GM10248 (cell line): ENCODE measurements at regions of chr11 and their contacts with region 1.

Region 1: DNA sequence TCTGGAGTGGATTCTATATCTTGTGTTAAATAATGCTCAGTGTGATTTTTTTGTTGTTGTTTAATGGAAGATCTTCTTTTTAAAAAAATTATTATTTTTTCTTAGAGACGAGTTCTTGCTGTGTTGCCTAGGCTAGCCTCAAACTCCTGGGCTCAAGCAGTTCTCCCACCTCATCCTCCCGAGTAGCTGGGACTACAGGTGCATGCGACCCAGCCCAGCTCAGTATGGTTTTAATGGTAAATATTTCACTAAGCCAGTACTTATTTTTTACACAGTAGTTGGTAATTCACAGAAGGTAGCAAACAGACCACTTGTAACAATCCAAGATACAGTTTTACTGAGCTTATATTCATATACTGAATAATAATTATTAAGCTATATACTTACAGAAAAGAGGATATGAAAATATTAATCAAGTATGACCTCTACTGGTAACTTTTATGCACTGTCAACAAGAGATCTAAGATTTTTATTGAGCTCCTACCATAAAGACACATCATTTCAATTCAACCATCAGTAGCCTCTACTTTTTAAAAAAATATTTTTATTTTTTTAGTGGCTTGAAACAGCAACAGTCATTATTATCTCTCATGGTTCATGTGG is 6.1 kb upstream of the CD59 start:
- DNase-seq: no peak
- CTCF ChIP-seq: peak; percentile 50

Region 2: GRCh38 chr11:33362051-33362910 is 380.1 kb before region 1 on chr11:
- CTCF ChIA-PET with region 1: interaction called, 16 read pairs
- POLR2A ChIA-PET with region 1: no interaction called
- DNase-seq: peak; percentile 45
- CTCF ChIP-seq: peak; percentile 45

Region 3: DNA sequence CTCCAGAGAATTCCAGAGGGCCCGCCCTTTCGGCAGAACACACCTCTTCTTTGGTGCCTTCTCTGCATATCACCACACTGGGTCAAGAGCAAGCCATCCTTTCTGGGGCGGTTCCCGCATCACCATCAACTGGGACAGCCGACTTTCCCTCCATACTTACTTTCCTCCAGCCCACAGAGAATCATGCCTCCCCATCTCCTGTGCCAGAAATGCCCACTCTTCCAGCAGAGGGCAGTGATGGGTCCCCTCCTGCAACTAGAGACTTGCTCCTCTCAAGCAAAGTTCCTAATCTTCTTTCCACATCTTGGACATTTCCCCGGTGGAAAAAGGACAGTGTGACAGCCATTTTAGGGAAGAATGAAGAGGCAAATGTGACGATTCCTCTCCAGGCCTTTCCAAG is 199.4 kb before region 1 on chr11:
- CTCF ChIA-PET with region 1: interaction called, 10 read pairs
- POLR2A ChIA-PET with region 1: no interaction called
- DNase-seq: peak; percentile 64
- CTCF ChIP-seq: peak; percentile 58

Region 4: GRCh38 chr11:33700425-33701271 is 41.7 kb before region 1 on chr11 and contains the start of gene C11orf91:
- CTCF ChIA-PET with region 1: interaction called, 17 read pairs
- POLR2A ChIA-PET with region 1: interaction called, 3 read pairs
- DNase-seq: peak; percentile 97
- CTCF ChIP-seq: no peak

Region 5: DNA sequence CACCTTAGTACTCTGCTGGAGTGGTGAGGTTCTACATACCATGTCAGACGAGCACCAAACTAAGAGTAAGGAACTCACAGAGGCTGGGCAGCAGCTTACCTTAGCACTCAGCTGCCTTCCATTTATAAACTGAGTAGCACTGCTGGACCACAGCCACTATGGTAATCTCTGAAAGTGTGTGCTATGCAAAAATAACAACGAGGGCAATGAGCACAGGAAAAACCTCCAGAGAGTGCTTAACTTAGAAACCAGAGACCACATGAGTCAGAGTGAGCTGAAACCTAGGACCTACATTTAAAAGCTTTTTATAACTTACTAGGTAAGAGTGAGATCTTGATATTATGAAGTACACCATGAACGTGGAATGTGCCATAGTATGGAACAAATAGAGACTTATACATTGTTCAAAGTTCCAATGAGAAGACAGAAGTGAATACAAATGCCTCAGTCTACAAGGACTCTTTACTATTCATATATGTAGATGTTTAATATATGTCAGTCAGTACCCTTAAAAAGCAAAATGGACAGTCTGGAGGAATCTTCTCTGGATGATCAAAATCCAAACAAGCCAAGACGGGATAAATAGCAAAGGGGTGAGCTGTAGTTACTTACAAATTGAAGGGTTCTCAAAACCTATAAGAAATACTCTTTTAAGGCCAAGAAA is 11.1 kb after region 1 on chr11:
- CTCF ChIA-PET with region 1: interaction called, 33 read pairs
- POLR2A ChIA-PET with region 1: no interaction called
- DNase-seq: peak; percentile 39
- CTCF ChIP-seq: no peak

Region 6: DNA sequence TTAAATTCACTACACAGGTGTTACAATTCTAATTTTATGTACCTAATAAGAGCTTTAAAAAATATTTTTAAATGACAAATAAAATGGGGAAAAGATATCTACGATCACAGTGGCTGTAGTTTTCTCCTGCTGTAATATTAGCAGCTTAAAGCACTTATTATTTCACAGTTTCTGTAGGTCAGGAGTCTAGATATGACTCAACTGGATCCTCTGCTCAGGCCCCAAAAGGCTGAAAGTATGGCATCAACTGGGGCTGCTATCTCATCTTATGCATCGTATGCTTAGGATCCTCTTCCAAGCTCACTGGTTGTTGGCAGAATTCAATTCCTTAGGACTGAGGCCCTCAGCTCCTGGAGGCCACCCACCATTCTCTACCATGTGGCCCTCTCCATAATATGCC is 19.1 kb after region 1 on chr11:
- CTCF ChIA-PET with region 1: interaction called, 18 read pairs
- POLR2A ChIA-PET with region 1: no interaction called
- DNase-seq: peak; percentile 39
- CTCF ChIP-seq: no peak

Region 7: GRCh38 chr11:33773987-33774735 is 31.8 kb after region 1 on chr11 and contains the start of gene FBXO3:
- CTCF ChIA-PET with region 1: interaction called, 10 read pairs
- POLR2A ChIA-PET with region 1: interaction called, 3 read pairs
- DNase-seq: peak; percentile 98
- CTCF ChIP-seq: no peak